ENCODE measurements at regions of chr4 and their contacts with region 1.

Region 1: DNA sequence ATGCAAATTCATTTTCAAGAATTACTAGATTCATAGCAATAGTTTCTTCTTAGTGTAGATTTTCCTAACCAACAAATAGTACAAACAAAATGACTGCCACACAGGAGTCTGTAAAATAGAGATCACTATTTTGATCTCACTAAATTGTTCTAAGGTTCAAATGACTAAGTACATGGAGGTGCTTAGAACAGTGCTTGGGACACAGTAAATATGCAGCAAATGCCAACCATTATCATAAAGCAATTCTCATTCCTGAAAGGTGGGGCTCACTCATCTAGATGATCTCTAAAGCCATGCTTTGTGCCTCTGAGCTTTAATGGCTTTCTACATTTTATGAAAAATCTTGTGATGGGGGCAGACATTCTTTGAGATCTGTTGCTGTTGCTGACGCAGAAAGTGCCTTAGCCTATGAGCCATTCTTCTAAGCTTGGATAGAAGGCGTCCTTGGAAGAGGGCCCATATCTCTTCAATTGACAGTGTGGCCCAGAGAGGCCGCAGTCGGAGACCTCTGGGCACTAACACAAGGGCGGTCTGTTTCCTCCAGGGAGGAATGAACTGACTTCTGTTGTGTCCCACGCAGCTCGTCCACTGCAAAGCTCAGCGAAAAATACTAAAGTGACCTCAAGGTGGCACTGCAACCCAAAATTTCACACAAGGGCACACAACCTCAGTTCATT is 23.5 kb downstream of the TLR10 start:
- DNase-seq: peak; percentile 57
- ATAC-seq: peak; percentile 76
- H3K4me3 ChIP-seq: no peak overlapping the region
- H3K27ac ChIP-seq: no peak overlapping the region
- H3K4me1 ChIP-seq: no peaks in the 10 kb centered on the region
- H3K27me3 ChIP-seq: no peaks in the 10 kb centered on the region
- CTCF ChIP-seq: peak; percentile 73

Region 2: GRCh38 chr4:38782452-38783108 is 23.3 kb after region 1 on chr4 and contains the start of gene TLR10:
- CTCF ChIA-PET with region 1: interaction called, 10 read pairs
- POLR2A ChIA-PET with region 1: no interaction called
- intact Hi-C with region 1: loop called (anchors 2 kb)
- DNase-seq: peak; percentile 41
- ATAC-seq: peak; percentile 53
- H3K4me3 ChIP-seq: no peak within 1 kb of the TSS
- H3K27ac ChIP-seq: no peak within 1 kb of the TSS
- H3K4me1 ChIP-seq: no peaks in the 10 kb centered on the region
- H3K27me3 ChIP-seq: no peaks in the 10 kb centered on the region
- CTCF ChIP-seq: peak; percentile 48
- total RNA-seq, gene TLR10: not detected in 2 replicates

Region 3: DNA sequence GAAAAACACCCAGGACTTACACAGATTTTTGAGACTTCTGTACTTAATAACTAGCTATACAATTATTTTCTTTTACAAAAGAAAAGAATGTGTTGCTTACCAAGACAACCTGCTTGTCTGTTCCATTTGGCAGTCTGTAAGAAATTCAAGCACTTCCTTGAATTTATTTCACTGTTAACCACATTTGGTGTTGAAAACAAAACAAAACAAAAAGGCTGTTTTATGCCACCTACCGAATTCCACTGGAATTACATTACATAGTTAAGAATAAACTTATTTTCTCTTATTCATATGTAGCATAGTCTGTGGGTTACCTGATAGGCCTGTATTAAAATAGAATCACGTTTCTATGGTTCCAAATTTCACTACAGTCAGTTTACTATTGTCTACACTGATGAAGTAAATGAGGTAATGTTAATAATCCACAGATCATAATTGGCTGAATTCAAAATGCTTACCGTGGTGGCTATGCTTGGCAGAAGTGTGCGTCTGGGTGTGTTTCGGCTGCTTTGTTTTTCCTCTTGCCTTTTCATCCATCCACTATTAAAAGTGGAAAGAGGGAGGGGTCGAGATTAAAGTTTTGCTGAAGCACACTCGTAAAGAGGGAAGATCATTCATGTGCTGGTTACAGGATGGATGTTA is 45.5 kb after region 1 on chr4 and contains the start of gene TLR1:
- CTCF ChIA-PET with region 1: interaction called, 3 read pairs
- POLR2A ChIA-PET with region 1: no interaction called
- intact Hi-C with region 1: loop called (anchors 2 kb)
- DNase-seq: peak; percentile 65
- ATAC-seq: peak; percentile 64
- H3K4me3 ChIP-seq: no peak within 1 kb of the TSS
- H3K27ac ChIP-seq: peak within 1 kb of the TSS; percentile 38
- H3K4me1 ChIP-seq: peaks cover 9% of the 10 kb centered on the region
- H3K27me3 ChIP-seq: no peaks in the 10 kb centered on the region
- CTCF ChIP-seq: peak; percentile 63
- total RNA-seq, gene TLR1: 0.40 and 0.47 TPM in 2 replicates

Region 4: GRCh38 chr4:38856524-38857337 is 97.5 kb after region 1 on chr4 and contains the start of gene TLR6:
- CTCF ChIA-PET with region 1: interaction called, 3 read pairs
- POLR2A ChIA-PET with region 1: no interaction called
- intact Hi-C with region 1: loop called (anchors 1 kb)
- DNase-seq: peak; percentile 87
- ATAC-seq: peak; percentile 30; the same call in 1 of the 2 replicates
- H3K4me3 ChIP-seq: peak within 1 kb of the TSS; percentile 69
- H3K27ac ChIP-seq: peak within 1 kb of the TSS; percentile 91
- H3K4me1 ChIP-seq: peaks cover 15% of the 10 kb centered on the region
- H3K27me3 ChIP-seq: no peaks in the 10 kb centered on the region
- CTCF ChIP-seq: peak; percentile 77
- total RNA-seq, gene TLR6: 0.92 and 1.2 TPM in 2 replicates

Region 5: DNA sequence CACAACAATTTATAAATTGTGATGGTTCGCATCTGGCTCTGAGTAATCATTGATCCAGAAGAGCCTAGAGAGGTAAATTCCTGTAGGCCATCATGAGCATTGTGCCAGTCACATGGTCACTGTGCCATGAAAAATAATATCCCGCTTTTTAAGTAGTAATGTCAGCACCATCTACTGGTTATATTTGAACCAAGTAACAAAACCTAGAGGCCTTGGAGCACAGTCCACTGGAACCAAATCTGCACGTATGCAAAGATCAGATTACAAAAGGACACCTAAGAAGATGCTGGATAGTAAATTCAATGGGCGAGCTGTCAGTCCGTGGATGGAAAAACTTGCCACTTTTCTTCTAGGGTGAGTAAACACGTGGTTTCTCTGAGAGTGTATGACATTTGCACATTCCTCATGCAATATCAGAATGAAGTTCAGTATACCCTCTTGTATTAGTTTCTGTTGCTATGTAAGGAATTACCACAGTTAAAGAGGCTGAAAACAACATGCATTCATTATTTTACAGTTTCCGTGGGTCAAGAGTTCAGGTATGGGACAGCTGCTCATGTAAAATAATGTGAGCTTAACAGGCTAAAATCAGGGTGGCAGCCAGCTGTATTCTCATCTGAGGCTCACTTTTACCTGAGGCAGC is 135.2 kb after region 1 on chr4:
- CTCF ChIA-PET with region 1: no interaction called
- POLR2A ChIA-PET with region 1: no interaction called
- intact Hi-C with region 1: loop called (anchors 2 kb)
- DNase-seq: peak; percentile 39
- ATAC-seq: peak; percentile 49; the same call in 1 of the 2 replicates
- H3K4me3 ChIP-seq: no peak overlapping the region
- H3K27ac ChIP-seq: no peak overlapping the region
- H3K4me1 ChIP-seq: peaks cover 13% of the 10 kb centered on the region
- H3K27me3 ChIP-seq: no peaks in the 10 kb centered on the region
- CTCF ChIP-seq: peak; percentile 45

Region 6: GRCh38 chr4:39134683-39135319 is 375.6 kb after region 1 on chr4:
- CTCF ChIA-PET with region 1: interaction called, 11 read pairs
- POLR2A ChIA-PET with region 1: no interaction called
- intact Hi-C with region 1: no loop called
- DNase-seq: peak; percentile 7
- ATAC-seq: peak; percentile 61
- H3K4me3 ChIP-seq: peak overlapping the region; percentile 50; the same call in 1 of the 2 replicates
- H3K27ac ChIP-seq: 0 out of 2 replicates have a peak overlapping the region, but pooled peaks have one; percentile 2
- H3K4me1 ChIP-seq: peaks cover 7% of the 10 kb centered on the region
- H3K27me3 ChIP-seq: no peaks in the 10 kb centered on the region
- CTCF ChIP-seq: no peak

Region 7: DNA sequence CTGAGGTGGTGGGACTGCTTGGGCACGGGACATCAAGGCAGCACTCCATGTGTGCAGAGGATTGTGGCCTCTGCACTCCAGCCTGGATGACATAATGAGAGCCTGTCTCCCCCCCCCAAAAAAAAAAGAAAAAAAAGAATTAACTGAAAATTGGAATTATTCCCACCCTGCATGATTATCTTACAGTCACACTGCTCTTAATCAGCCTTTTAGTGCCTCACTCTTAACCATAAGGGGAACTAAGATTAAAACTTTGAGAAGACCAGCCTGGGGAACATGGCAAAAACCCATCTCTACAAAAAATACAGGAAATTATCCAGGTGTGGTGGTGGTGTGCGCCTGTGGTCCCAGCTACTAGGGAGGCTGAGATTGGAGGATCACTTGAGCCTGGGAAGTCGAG is 1033.3 kb after region 1 on chr4:
- CTCF ChIA-PET with region 1: no interaction called
- POLR2A ChIA-PET with region 1: no interaction called
- intact Hi-C with region 1: no loop called
- DNase-seq: no peak
- ATAC-seq: no peak
- H3K4me3 ChIP-seq: no peak overlapping the region
- H3K27ac ChIP-seq: no peak overlapping the region
- H3K4me1 ChIP-seq: no peaks in the 10 kb centered on the region
- H3K27me3 ChIP-seq: no peaks in the 10 kb centered on the region
- CTCF ChIP-seq: no peak

Measured in PC-3 (cell line).